ENCODE measurements at regions of chr19 and their contacts with region 1.

Region 1: DNA sequence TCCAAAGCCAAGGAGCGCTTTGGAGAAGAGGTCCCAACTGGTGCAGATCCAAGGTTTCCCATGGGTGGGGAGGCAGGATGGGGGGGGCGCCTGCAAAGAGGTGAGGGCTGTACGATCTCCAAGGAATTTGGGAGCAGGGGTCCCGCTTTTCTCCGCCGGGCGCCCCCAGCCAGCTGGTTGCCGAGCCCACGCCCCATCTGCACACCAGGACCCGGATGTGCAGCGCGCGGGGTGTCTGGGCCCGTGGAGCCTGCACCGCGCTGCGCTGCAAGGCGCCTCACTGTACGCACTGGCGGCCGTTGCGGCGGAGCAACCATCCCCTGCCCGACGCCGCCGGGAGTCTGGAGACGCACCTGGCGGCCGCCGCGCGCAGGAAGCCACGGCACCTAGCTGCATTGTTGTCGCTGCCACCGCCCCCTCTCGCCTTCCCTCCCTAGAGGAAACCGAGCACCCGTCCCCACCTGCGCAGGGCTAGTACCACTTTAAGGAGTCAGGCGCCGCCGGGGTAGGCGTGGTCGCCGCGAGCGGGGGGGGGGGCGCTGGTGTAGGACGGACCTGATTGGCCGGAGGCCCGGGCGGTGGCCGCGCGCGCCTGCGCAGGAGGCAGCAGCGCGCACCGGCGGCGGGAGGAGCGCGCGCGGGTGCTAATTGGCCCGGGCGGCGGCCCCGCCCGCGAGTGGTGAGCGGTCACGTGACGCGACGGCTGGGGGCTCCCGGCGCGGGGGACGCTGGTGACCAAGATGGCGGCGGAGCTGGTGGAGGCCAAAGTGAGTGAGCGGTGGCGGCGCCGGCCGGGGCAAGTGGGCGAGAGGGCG is at the start of gene PIAS4:
- DNase-seq: peak; percentile 98 to 99
- H3K4me3 ChIP-seq: peak within 1 kb of the TSS; percentile 88 to 100 (median 99)
- H3K27ac ChIP-seq: peak within 1 kb of the TSS; percentile 85 to 98 (median 90)
- H3K4me1 ChIP-seq: peaks cover 40 to 55% (median 48%) of the 10 kb centered on the region in 4 donors
- H3K27me3 ChIP-seq: no peaks in the 10 kb centered on the region
- CTCF ChIP-seq: peak in 1 of 7 experiments; percentile 6
- EP300 ChIP-seq: no peak
- POLR2A ChIP-seq: no peak
- total RNA-seq, gene PIAS4: 9.3 to 93.6 (median 37.5) TPM

Region 2: DNA sequence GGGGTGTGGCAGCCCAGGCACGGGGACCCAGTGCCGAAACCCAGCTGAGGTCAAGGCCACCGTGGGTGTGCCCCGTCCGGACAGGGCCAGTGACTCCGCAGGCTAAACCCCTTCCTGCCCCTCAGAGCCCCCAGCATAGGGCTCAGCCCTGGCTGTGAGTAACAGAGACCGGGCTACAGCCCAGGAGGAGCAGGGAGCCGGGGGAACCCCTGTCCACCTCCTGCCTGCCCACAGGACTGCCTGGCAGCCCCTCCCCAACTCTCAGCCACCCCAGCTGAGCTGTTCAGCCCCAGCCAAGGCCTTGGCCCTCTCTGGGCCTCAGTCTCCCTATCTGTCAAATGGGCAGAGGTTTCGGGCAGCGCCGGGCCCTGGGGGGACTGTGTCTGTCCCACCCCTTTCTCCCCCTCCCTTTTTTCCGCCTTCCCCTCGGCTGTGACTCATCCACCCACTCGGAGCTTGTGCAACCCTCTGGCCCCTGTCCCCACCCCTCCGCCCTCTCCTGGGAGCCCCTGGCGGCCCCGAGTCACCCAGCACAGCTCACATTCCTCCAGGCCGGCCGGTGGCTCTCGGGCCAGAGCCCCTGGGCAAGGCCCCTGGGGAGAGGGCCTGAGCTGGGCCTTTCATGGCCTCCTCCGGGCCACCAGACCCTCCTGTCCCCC is 50.9 kb after region 1 on chr19:
- intact Hi-C with region 1: loop called (anchors 10 kb)
- DNase-seq: peak; percentile 81 to 91
- H3K4me3 ChIP-seq: peak overlapping the region; percentile 38 to 100 (median 92)
- H3K27ac ChIP-seq: peak overlapping the region; percentile 95 to 100 (median 98)
- H3K4me1 ChIP-seq: peaks cover 66 to 93% (median 83%) of the 10 kb centered on the region in 4 donors
- H3K27me3 ChIP-seq: no peaks in the 10 kb centered on the region
- CTCF ChIP-seq: peak in 1 of 7 experiments; percentile 33
- EP300 ChIP-seq: no peak
- POLR2A ChIP-seq: no peak

Region 3: GRCh38 chr19:4328243-4328990 is 321.2 kb after region 1 on chr19:
- intact Hi-C with region 1: no loop called
- DNase-seq: peak; percentile 96 to 99
- H3K4me3 ChIP-seq: peak overlapping the region; percentile 30 to 57 (median 46)
- H3K27ac ChIP-seq: peak overlapping the region in 4 of 5 donors; percentile 49 to 65 (median 60)
- H3K4me1 ChIP-seq: peaks cover 21 to 29% (median 28%) of the 10 kb centered on the region in 4 donors
- H3K27me3 ChIP-seq: peaks cover 0 to 39% (median 0%) of the 10 kb centered on the region in 3 donors
- CTCF ChIP-seq: no peak
- EP300 ChIP-seq: no peak
- POLR2A ChIP-seq: peak in 1 of 4 donors; percentile 5

Measured in stomach (tissue), 19 donors.